ENCODE measurements at regions of chr1 and their contacts with region 1.

Region 1: DNA sequence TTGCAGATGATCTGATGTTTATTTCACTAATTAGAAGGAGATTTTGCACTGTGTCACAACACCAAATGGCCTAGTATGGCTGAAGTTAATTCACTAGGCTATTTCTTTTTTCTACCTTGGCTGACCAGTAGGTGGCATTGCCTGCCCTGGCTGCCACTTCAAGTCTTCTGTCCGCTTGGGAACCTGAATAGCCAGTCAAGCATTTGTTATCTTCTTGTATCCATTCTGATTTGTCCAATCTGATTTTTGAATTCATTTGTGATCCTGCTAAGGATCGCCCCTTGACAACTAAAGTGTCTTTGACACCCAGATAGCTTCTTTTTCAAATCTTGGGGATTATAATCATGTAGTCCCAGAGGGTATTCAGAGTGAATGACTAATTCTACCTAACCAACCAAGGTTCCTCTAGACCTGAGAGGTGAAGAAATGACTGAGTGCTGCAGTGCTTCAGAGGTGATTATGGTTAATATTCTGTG is 99.4 kb downstream of the GIPC2 start:
- DNase-seq: peak; percentile 52
- H3K4me3 ChIP-seq: no peak overlapping the region
- H3K27ac ChIP-seq: no peak overlapping the region
- H3K4me1 ChIP-seq: no peaks in the 10 kb centered on the region
- H3K27me3 ChIP-seq: no peaks in the 10 kb centered on the region
- CTCF ChIP-seq: peak; percentile 57 to 79 (median 76)
- POLR2A ChIP-seq: no peak

Region 2: DNA sequence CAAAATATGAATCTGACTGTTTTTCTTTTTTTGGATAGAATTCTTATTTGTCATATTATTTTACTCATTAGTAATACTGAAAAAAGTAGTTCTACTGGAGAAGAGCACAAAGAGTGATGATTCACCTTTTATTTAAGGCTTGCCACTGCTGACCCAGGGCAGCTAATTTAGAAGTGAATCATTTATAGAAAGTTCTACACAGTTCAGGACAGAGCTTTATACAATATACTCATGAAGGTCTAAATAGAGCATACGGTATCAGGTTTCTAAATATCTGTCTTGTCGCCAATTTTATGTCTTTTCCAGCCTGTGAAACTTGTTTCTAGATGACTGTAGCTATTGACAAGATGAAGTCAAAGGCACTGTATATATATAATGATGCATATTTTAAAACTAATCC is 74.4 kb before region 1 on chr1:
- intact Hi-C with region 1: no loop called
- DNase-seq: no peak
- H3K4me3 ChIP-seq: no peak overlapping the region
- H3K27ac ChIP-seq: no peak overlapping the region
- H3K4me1 ChIP-seq: no peaks in the 10 kb centered on the region
- H3K27me3 ChIP-seq: no peaks in the 10 kb centered on the region
- CTCF ChIP-seq: no peak
- POLR2A ChIP-seq: no peak

Region 3: GRCh38 chr1:78114034-78114956 is 30.8 kb before region 1 on chr1:
- intact Hi-C with region 1: no loop called
- DNase-seq: peak; percentile 67
- H3K4me3 ChIP-seq: no peak overlapping the region
- H3K27ac ChIP-seq: no peak overlapping the region
- H3K4me1 ChIP-seq: no peaks in the 10 kb centered on the region
- H3K27me3 ChIP-seq: no peaks in the 10 kb centered on the region
- CTCF ChIP-seq: peak; percentile 63 to 91 (median 86)
- POLR2A ChIP-seq: no peak

Region 4: DNA sequence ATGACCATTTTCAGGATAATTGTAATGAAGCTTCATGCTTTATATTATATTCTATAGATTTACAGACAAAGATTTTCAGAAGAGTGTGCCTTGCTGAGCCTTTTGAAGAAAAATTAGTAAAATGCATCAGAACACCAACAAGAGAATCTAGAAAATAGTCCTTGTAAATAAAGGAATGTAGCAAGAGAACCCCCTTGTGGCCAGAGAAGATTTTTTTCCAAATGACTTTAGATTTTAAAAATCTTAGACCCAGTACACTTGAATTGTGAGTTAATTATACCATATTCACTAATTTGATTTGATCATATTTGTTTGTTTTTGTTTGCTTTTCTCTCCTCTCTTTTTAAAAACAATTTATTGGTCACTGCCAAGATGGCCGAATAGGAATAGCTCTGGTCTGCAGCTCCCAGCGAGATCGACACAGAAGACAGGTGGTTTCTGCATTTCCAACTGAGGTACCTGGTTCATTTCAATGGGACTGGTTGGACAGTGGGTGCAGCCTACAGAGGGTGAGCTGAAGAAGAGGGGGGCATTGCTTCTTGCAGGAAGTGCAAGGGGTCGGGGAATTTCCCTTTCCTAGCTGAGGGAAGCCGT is 462.3 kb after region 1 on chr1:
- intact Hi-C with region 1: loop called (anchors 5 kb)
- DNase-seq: no peak
- H3K4me3 ChIP-seq: no peak overlapping the region
- H3K27ac ChIP-seq: no peak overlapping the region
- H3K4me1 ChIP-seq: no peaks in the 10 kb centered on the region
- H3K27me3 ChIP-seq: no peaks in the 10 kb centered on the region
- CTCF ChIP-seq: peak in 3 of 4 experiments; percentile 60 to 74 (median 68)
- POLR2A ChIP-seq: no peak

Region 5: DNA sequence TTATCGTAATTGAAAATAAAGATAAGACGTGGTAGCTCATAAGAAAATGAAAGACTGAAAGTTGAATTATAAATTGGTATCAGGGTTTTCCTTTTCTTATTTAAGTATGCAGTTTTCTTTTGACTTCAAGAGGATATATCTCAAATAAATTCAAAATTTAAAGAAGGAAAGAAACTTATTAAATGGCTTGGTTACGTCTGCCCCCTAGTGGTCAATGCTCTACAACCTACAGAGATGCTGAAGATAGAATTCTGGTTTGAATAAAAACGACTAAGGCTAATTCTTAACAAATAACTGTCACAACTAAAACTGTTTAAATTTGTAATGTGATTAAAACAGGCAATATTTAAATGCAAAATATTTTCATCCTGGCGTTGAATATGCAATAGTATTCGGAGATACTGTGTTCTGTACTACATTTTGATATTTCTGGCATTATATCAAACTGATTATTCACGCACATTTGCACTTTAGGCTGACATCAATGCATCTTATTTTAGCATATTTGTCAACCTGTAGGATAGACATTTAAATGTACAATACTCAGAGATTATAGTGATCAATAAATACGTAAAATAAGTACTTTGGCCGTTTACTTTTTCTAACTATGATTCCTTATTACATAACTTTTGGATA is 531.3 kb after region 1 on chr1:
- intact Hi-C with region 1: loop called (anchors 10 kb)
- DNase-seq: peak; percentile 66
- H3K4me3 ChIP-seq: no peak overlapping the region
- H3K27ac ChIP-seq: no peak overlapping the region
- H3K4me1 ChIP-seq: no peaks in the 10 kb centered on the region
- H3K27me3 ChIP-seq: no peaks in the 10 kb centered on the region
- CTCF ChIP-seq: peak; percentile 68 to 89 (median 83)
- POLR2A ChIP-seq: no peak